Activated CD4-positive, alpha-beta memory T cell treated with anti-CD3 and anti-CD28 coated beads, Interleukin-2, amount 10 ng/mL, durations not matched to agents 7 days and 5 days (primary cell): ENCODE measurements at regions of chr18 and their contacts with region 1.

Region 1: DNA sequence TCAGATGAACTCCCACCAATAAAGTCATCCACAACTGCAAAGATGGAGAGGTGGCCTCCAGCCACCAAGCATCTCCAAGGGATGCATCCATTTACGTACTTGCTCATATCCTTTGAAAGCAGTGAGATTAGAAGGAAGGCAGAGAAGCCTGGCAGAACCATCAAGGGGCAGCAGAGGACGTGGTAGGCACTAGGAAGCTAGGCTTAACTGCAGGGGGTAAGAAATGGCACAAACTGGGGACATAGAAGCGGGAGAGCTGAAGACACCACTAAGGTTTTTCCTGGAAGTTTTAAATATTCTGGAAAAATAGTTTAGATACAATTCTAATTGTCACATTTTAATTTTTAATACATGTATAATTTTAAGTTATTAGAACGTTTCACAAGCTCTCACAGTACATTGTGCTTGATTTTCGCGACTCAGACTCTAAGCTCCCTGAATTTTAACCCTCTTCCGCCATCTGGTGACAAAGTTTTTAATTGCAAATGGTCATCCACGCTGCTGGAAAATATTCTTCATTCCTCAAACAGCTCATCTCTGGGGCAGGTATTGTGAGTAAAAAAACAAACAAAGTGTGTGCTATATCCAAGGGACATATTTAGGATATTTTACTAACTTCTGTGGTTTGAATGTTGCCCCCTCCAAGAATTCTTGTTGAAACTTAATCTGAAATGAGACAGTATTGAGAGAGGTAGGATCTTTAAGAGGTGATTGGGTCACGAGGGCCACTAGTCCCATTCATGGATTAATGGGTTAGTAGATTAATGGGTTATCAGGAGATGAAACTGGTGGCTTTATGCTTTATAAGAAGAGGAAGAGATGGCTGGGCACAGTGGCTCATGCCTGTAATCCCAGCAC is 1.6 kb upstream of the PSTPIP2 start:
- DNase-seq: peak; percentile 49
- H3K4me3 Mint-ChIP-seq: no peak overlapping the region
- H3K27ac Mint-ChIP-seq: no peak overlapping the region
- H3K4me1 Mint-ChIP-seq: peaks cover 30% of the 10 kb centered on the region
- H3K27me3 Mint-ChIP-seq: peaks cover 5% of the 10 kb centered on the region

Region 2: DNA sequence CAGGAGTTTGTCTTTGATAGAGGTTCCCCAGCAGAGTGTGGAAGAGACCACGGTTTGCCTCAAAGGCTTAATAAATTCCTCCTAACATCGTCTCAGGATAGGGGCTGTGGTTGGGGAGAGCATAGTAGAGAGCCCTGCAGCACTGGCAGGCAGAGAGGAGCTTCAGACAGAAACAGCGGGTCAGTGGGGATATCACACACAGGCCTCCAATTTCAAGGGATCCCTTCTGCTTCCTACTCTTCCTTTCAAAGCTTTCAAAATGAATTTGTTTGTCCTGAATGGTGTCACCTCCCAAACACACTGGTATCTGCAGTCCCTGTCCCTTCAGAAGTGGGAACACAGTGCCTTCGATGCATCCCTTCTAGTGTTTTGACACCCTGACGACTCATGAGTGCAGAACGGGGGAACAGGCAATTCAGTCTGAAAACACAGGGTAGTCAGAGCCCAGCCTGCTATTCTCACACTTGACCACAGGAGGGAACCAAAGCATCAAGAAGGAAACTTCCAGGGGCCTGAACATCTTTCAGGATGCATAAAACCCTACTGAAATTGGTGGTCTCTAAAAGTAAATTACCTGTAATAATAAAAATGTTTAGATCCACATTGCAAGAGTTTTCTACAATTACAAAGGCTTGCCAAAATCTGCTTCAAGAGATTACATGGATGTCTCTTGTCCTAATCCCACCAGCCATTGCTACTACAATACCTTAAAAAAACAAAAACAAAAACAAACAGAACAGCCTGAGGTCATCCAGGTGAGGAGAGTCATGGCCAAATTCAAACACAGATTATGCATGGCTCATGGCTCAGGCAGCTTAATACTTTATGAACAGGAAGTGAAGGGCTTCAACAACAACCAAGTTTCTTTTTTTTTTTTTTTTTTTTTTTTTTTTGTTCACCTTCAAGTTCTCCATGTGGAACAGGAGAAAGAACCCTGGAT is 408.6 kb before region 1 on chr18:
- CTCF ChIA-PET with region 1: interaction called, 36 read pairs
- POLR2A ChIA-PET with region 1: interaction called, 5 read pairs
- DNase-seq: peak; percentile 70
- H3K4me3 Mint-ChIP-seq: no peak overlapping the region
- H3K27ac Mint-ChIP-seq: peak overlapping the region; percentile 76
- H3K4me1 Mint-ChIP-seq: peaks cover 50% of the 10 kb centered on the region
- H3K27me3 Mint-ChIP-seq: peaks cover 3% of the 10 kb centered on the region

Region 3: GRCh38 chr18:45879681-45880655 is 193.7 kb before region 1 on chr18:
- CTCF ChIA-PET with region 1: interaction called, 20 read pairs
- POLR2A ChIA-PET with region 1: no interaction called
- DNase-seq: peak; percentile 70
- H3K4me3 Mint-ChIP-seq: no peak overlapping the region
- H3K27ac Mint-ChIP-seq: no peak overlapping the region
- H3K4me1 Mint-ChIP-seq: peaks cover 11% of the 10 kb centered on the region
- H3K27me3 Mint-ChIP-seq: no peaks in the 10 kb centered on the region

Region 4: DNA sequence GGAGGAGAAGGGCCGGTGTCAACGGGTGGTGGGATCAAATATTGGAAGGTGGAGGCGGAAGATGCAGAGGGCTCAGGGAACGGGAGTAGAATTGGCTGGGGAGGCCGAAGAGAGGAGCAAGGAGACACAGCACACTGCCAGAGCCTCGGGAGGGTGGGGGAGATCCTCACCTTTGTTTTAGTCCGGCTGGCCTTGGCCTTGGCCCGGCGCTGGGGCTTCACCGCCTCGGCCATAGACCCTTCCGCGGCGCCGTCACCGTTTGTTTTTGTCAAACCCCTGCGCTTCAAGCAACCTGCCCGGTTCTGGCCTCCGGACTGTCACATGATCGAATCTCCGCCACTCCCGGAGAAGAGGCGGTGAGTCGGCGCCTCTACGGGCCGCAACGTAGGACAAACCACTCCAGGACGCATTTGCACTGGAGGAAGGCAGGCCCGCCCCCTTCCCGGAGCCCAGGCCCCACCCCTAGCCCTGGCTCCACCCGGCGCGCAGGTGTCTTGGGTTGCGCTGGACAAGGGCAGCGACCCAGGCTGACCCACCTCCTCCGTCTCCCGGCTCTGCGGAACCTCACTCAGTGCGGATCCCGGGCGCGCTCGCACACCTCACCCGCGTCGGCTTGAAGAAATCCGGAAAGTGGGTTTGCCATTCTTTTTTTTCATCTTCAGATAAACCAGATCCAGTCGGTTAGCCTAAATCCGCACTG is 106.5 kb before region 1 on chr18 and contains the start of gene EPG5:
- CTCF ChIA-PET with region 1: interaction called, 14 read pairs
- POLR2A ChIA-PET with region 1: interaction called, 3 read pairs
- DNase-seq: peak; percentile 96
- H3K4me3 Mint-ChIP-seq: peak within 1 kb of the TSS; percentile 99
- H3K27ac Mint-ChIP-seq: peak within 1 kb of the TSS; percentile 90
- H3K4me1 Mint-ChIP-seq: peaks cover 43% of the 10 kb centered on the region
- H3K27me3 Mint-ChIP-seq: no peaks in the 10 kb centered on the region
- total RNA-seq, gene EPG5: 28.7 to 29.0 TPM

Region 5: DNA sequence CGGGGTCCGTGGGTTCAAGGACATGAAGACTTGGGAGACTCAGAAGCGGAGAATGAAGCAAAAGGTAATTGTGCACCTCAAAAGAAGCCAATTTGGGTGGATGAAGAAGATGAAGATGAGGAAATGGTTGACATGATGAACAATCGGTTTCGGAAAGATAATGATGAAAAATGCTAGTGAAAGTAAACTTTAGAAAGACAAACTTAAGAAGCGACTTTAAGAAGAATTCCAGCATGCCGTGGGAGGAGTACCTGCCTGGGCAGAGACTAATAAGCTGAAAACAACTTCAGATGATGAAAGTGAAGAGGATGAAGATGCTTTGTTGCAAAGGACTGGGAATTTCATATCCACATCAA is 45.2 kb before region 1 on chr18:
- CTCF ChIA-PET with region 1: interaction called, 4 read pairs
- POLR2A ChIA-PET with region 1: interaction called, 10 read pairs
- DNase-seq: no peak
- H3K4me3 Mint-ChIP-seq: peak overlapping the region; percentile 81
- H3K27ac Mint-ChIP-seq: peak overlapping the region; percentile 3
- H3K4me1 Mint-ChIP-seq: peaks cover 14% of the 10 kb centered on the region
- H3K27me3 Mint-ChIP-seq: peaks cover 14% of the 10 kb centered on the region

Region 6: DNA sequence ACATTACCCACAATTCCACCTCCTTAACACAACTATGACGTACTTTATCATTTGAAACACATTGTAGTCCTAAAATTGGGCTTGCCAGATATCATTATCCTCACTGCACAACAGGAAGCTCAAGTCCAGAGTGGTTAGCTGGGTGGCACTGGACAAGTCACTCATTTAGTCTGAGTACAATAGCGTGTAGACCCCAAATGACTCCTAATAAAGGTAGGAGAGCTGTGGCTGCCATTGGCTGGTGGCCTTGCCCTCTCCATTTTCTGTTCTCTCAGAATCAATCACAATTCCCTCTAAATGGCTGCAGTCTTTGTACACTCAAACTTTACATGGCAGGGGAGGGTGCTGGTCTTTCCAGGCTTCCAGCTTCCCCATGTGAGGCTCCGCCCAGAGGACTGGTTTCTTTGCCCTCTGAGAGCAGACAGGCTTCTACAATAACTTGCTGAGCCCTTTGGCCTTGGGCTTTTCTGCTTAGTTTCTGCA is 13.3 kb before region 1 on chr18:
- CTCF ChIA-PET with region 1: interaction called, 15 read pairs
- POLR2A ChIA-PET with region 1: interaction called, 30 read pairs
- DNase-seq: no peak
- H3K4me3 Mint-ChIP-seq: no peak overlapping the region
- H3K27ac Mint-ChIP-seq: no peak overlapping the region
- H3K4me1 Mint-ChIP-seq: peaks cover 15% of the 10 kb centered on the region
- H3K27me3 Mint-ChIP-seq: no peaks in the 10 kb centered on the region

Region 7: GRCh38 chr18:46110406-46110805 is 36.7 kb after region 1 on chr18:
- CTCF ChIA-PET with region 1: no interaction called
- POLR2A ChIA-PET with region 1: no interaction called
- DNase-seq: no peak
- H3K4me3 Mint-ChIP-seq: no peak overlapping the region
- H3K27ac Mint-ChIP-seq: no peak overlapping the region
- H3K4me1 Mint-ChIP-seq: peaks cover 30% of the 10 kb centered on the region
- H3K27me3 Mint-ChIP-seq: no peaks in the 10 kb centered on the region

Region 8: DNA sequence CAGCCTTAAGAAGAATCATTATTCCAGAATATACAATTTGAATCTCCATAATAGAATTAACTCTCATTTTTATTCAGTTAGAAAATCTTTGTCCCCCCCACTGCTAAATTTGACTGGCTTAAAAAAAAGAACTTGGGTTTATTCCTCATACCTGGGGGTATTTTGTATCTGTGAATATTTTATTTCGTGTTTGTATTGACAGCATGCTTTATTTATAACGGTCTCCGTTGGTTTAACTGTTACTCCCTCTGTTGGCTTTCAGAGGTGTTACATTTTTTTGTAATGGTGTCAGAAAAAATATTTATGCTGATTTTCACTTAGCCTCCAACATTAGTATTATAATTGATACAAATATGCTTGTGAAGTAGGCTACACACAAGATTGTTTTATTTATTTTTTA is 139.6 kb after region 1 on chr18:
- CTCF ChIA-PET with region 1: no interaction called
- POLR2A ChIA-PET with region 1: no interaction called
- DNase-seq: no peak
- H3K4me3 Mint-ChIP-seq: no peak overlapping the region
- H3K27ac Mint-ChIP-seq: no peak overlapping the region
- H3K4me1 Mint-ChIP-seq: peaks cover 54% of the 10 kb centered on the region
- H3K27me3 Mint-ChIP-seq: no peaks in the 10 kb centered on the region